ENCODE measurements at regions of chr13 and their contacts with region 1.

Region 1: DNA sequence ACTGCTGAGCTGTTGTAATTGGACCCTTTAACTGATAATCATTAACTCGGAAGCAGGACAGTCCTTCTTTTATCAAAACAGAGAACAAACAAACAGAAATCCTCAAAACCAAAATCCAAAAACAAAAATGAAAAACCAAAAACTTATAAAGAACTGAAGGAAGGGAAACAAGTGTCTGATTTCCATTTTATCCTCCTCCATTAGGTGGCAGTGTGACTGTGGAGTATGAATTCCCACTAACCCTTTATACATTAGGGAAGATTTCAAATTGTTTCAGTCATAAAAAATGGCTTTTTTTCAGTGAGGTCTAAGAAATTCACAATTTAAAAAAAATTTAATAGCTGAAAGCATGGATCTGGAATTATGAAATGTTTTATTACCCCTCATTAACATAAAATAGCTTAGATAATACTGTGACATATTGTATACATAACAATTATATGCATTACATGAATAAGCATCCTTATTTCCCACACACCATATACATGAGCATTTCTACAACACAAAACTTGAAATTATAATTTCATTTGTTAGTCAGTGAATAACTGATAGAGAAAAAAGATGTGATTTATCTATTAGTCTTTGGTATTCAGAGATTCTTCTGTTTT is 1074.3 kb upstream of the PCDH9 start:
- DNase-seq: peak in 1 of 2 experiments; percentile 38
- H3K4me3 ChIP-seq: no peak overlapping the region
- H3K4me3 Mint-ChIP-seq: no peak overlapping the region
- H3K27ac Mint-ChIP-seq: no peak overlapping the region
- H3K4me1 ChIP-seq: no peaks in the 10 kb centered on the region
- H3K4me1 Mint-ChIP-seq: no peaks in the 10 kb centered on the region
- H3K27me3 ChIP-seq: no peaks in the 10 kb centered on the region
- H3K27me3 Mint-ChIP-seq: peaks cover 4% of the 10 kb centered on the region
- CTCF ChIP-seq: peak; percentile 67 to 69

Region 2: GRCh38 chr13:67662997-67663396 is 641.4 kb before region 1 on chr13:
- CTCF ChIA-PET with region 1: no interaction called
- POLR2A ChIA-PET with region 1: no interaction called
- intact Hi-C with region 1: no loop called
- DNase-seq: no peak
- H3K4me3 ChIP-seq: no peak overlapping the region
- H3K4me3 Mint-ChIP-seq: no peak overlapping the region
- H3K27ac Mint-ChIP-seq: no peak overlapping the region
- H3K4me1 ChIP-seq: no peaks in the 10 kb centered on the region
- H3K4me1 Mint-ChIP-seq: no peaks in the 10 kb centered on the region
- H3K27me3 ChIP-seq: no peaks in the 10 kb centered on the region
- H3K27me3 Mint-ChIP-seq: no peaks in the 10 kb centered on the region
- CTCF ChIP-seq: no peak

Region 3: GRCh38 chr13:68390987-68391386 is 86.6 kb after region 1 on chr13:
- CTCF ChIA-PET with region 1: no interaction called
- POLR2A ChIA-PET with region 1: no interaction called
- intact Hi-C with region 1: no loop called
- DNase-seq: no peak
- H3K4me3 ChIP-seq: no peak overlapping the region
- H3K4me3 Mint-ChIP-seq: no peak overlapping the region
- H3K27ac Mint-ChIP-seq: no peak overlapping the region
- H3K4me1 ChIP-seq: no peaks in the 10 kb centered on the region
- H3K4me1 Mint-ChIP-seq: no peaks in the 10 kb centered on the region
- H3K27me3 ChIP-seq: no peaks in the 10 kb centered on the region
- H3K27me3 Mint-ChIP-seq: no peaks in the 10 kb centered on the region
- CTCF ChIP-seq: no peak

Region 4: DNA sequence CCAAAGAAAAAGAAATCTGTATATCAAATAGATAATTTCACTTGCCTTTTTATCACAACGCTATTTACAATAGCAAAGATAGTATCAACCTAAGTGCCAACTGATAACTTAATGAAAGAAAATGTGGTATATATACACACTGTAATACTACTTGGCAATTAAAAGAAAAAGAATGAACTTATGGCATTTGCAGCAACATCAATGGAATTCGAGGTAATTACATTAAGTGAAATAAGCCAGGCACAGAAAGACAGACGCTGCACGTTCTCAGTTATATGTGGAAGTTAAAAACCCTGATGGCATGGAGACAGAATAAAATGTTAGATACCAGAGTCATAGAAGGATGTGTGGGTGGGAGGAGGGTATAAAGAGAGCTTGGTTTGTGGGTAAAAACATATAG is 186.2 kb after region 1 on chr13:
- CTCF ChIA-PET with region 1: no interaction called
- POLR2A ChIA-PET with region 1: no interaction called
- intact Hi-C with region 1: loop called (anchors 10 kb)
- DNase-seq: no peak
- H3K4me3 ChIP-seq: no peak overlapping the region
- H3K4me3 Mint-ChIP-seq: no peak overlapping the region
- H3K27ac Mint-ChIP-seq: no peak overlapping the region
- H3K4me1 ChIP-seq: no peaks in the 10 kb centered on the region
- H3K4me1 Mint-ChIP-seq: no peaks in the 10 kb centered on the region
- H3K27me3 ChIP-seq: no peaks in the 10 kb centered on the region
- H3K27me3 Mint-ChIP-seq: peaks cover 2% of the 10 kb centered on the region
- CTCF ChIP-seq: no peak

Region 5: GRCh38 chr13:68810660-68811059 is 506.3 kb after region 1 on chr13:
- CTCF ChIA-PET with region 1: no interaction called
- POLR2A ChIA-PET with region 1: no interaction called
- intact Hi-C with region 1: loop called (anchors 10 kb)
- DNase-seq: peak in 1 of 2 experiments; percentile 16
- H3K4me3 ChIP-seq: no peak overlapping the region
- H3K4me3 Mint-ChIP-seq: no peak overlapping the region
- H3K27ac Mint-ChIP-seq: no peak overlapping the region
- H3K4me1 ChIP-seq: no peaks in the 10 kb centered on the region
- H3K4me1 Mint-ChIP-seq: no peaks in the 10 kb centered on the region
- H3K27me3 ChIP-seq: no peaks in the 10 kb centered on the region
- H3K27me3 Mint-ChIP-seq: no peaks in the 10 kb centered on the region
- CTCF ChIP-seq: peak; percentile 23 to 61

Measured in Caco-2 (cell line).